Activated B cell treated with CpG ODN at 0.5 μM for 24 hours (primary cell): ENCODE measurements at regions of chr14 and their contacts with region 1.

Region 1: GRCh38 chr14:24093901-24094761 is at the start of gene PCK2:
- DNase-seq: peak; percentile 76
- ATAC-seq: peak; percentile 69
- H3K4me3 Mint-ChIP-seq: peak within 1 kb of the TSS; percentile 99
- H3K27ac Mint-ChIP-seq: peak within 1 kb of the TSS; percentile 99
- H3K4me1 Mint-ChIP-seq: peaks cover 31% of the 10 kb centered on the region
- H3K27me3 Mint-ChIP-seq: no peaks in the 10 kb centered on the region
- CTCF ChIP-seq: no peak
- total RNA-seq, gene PCK2: 82.1 and 102 TPM in 2 replicates

Region 2: GRCh38 chr14:23555882-23556699 is 538.0 kb before region 1 on chr14 and contains the start of gene THTPA:
- CTCF ChIA-PET with region 1: no interaction called
- POLR2A ChIA-PET with region 1: no interaction called
- intact Hi-C with region 1: loop called (anchors 10 kb)
- DNase-seq: peak; percentile 88
- ATAC-seq: peak; percentile 79
- H3K4me3 Mint-ChIP-seq: peak within 1 kb of the TSS; percentile 94
- H3K27ac Mint-ChIP-seq: peak within 1 kb of the TSS; percentile 95
- H3K4me1 Mint-ChIP-seq: peaks cover 30% of the 10 kb centered on the region
- H3K27me3 Mint-ChIP-seq: no peaks in the 10 kb centered on the region
- CTCF ChIP-seq: no peak
- total RNA-seq, gene THTPA: 18.0 and 18.6 TPM in 2 replicates

Region 3: GRCh38 chr14:24058260-24058950 is 35.7 kb before region 1 on chr14:
- CTCF ChIA-PET with region 1: interaction called, 138 read pairs
- POLR2A ChIA-PET with region 1: interaction called, 18 read pairs
- intact Hi-C with region 1: loop called (anchors 1 kb)
- DNase-seq: no peak
- ATAC-seq: peak; percentile 84
- H3K4me3 Mint-ChIP-seq: no peak overlapping the region
- H3K27ac Mint-ChIP-seq: no peak overlapping the region
- H3K4me1 Mint-ChIP-seq: peaks cover 2% of the 10 kb centered on the region
- H3K27me3 Mint-ChIP-seq: no peaks in the 10 kb centered on the region
- CTCF ChIP-seq: no peak

Region 4: DNA sequence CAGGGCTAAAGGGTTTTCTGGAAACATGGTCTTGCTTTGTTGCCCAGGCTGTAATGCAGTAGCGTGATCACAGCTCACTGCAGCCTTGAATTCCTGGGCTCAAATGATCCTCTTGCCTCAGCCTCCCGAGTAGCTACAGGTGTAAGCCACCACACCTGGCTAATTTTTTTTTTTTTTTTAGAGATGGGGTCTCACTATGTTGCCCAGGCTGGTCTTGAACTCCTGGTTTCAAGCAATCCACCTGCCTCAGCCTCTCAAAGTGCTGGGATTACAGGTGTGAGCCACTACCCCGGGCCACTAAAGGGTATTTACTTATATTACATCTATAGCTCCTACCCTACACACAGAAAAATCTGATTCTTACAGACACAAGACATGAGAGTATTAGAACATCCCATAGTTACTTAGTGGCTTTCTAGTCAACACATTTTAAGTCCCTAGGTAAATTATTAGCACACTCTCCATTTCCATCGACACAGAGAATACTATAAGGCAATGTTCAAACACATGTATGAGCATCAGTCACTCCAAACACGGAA is 14.3 kb after region 1 on chr14:
- CTCF ChIA-PET with region 1: interaction called, 137 read pairs
- POLR2A ChIA-PET with region 1: interaction called, 138 read pairs
- intact Hi-C with region 1: loop called (anchors 1 kb)
- DNase-seq: no peak
- ATAC-seq: no peak
- H3K4me3 Mint-ChIP-seq: no peak overlapping the region
- H3K27ac Mint-ChIP-seq: peak overlapping the region; percentile 90
- H3K4me1 Mint-ChIP-seq: peaks cover 12% of the 10 kb centered on the region
- H3K27me3 Mint-ChIP-seq: no peaks in the 10 kb centered on the region
- CTCF ChIP-seq: no peak

Region 5: DNA sequence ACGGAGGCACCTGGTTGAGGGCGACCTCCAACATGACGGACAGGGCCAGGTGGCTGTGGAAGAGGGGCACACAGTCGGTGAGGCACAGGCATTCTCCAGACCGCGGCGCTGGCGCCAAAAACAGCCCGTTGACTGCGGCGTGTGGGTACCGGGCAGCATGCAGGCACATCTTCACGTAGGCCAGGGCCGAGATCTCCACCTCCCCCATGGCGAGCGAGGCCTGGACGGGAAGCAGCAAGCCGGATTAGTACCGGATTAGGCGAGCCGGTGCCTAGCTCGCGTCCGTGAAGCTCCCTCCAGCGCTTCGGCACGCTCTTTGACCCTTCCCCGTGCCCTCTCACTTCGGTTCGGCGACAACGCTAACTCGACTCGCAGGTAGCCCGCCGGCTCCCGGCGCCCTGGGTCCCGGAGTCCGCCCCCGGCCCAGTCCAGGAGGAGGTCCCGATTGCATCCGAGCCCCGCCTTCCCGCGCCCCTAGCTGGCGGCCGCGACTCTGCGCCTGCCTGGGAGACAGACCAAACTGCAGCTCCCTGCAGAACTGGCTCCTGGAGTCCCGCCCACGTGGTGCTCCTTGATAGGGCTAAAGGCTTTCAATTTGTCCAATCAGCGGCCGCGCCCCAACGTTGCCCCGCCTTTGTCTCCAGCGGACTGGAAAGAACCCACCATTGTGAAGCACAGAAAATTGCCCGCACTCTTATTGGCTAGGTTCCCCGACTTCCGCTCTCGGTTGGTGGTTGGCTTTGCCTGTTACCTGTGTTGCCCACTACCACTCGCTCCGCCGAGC is 47.2 kb after region 1 on chr14 and contains the start of gene EMC9:
- CTCF ChIA-PET with region 1: interaction called, 8 read pairs
- POLR2A ChIA-PET with region 1: interaction called, 51 read pairs
- intact Hi-C with region 1: loop called (anchors 1 kb)
- DNase-seq: peak; percentile 92
- ATAC-seq: peak; percentile 90
- H3K4me3 Mint-ChIP-seq: peak within 1 kb of the TSS; percentile 83
- H3K27ac Mint-ChIP-seq: peak within 1 kb of the TSS; percentile 87
- H3K4me1 Mint-ChIP-seq: peaks cover 78% of the 10 kb centered on the region
- H3K27me3 Mint-ChIP-seq: no peaks in the 10 kb centered on the region
- CTCF ChIP-seq: no peak
- total RNA-seq, gene EMC9: 22.5 and 22.6 TPM in 2 replicates

Region 6: GRCh38 chr14:24167469-24168114 is 73.5 kb after region 1 on chr14:
- CTCF ChIA-PET with region 1: no interaction called
- POLR2A ChIA-PET with region 1: no interaction called
- intact Hi-C with region 1: no loop called
- DNase-seq: no peak
- ATAC-seq: no peak
- H3K4me3 Mint-ChIP-seq: no peak overlapping the region
- H3K27ac Mint-ChIP-seq: peak overlapping the region; percentile 37
- H3K4me1 Mint-ChIP-seq: peaks cover 43% of the 10 kb centered on the region
- H3K27me3 Mint-ChIP-seq: no peaks in the 10 kb centered on the region
- CTCF ChIP-seq: no peak

Region 7: DNA sequence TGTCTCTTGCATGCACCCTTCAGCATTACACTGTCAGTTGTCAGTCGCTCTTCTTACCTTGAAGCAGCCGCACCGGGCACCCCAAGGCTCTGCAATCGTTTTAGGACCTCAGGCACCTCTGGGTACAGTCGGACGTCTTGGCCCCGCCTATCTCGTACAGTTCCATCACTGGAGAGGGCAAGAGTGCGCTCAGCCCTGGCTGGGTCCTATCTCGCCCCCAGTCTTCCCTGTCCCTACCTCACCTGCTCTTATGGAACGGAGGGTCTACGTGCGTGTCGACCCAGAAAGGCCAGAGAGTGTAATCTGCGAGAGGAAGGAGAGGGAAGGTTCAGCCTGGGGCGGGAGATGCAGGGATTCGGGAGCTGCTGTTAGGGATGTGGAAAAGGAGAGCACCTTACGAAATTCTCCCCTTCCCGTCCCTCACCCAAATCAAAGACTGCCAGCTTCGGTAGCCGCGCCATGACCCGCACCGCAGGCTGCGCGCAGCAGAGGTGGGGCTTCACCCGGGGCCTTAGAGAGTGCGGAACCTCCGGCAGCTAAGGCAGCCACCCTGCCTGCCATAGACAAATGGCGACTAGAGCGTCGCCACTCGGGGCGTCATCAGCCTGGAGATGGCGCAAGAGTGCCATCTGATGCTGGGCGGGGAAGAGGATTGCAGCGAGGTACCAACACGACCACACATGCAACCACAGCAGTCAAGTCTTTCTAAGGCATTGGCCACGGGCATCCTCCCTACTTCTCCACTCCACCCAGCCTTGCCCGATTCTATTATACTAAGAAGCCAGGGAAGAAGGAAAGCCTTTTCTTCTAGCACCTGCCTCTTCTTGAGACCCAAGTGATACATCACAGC is 121.6 kb after region 1 on chr14 and contains the start of gene MDP1:
- CTCF ChIA-PET with region 1: interaction called, 3 read pairs
- POLR2A ChIA-PET with region 1: interaction called, 22 read pairs
- intact Hi-C with region 1: loop called (anchors 1 kb)
- DNase-seq: peak; percentile 71
- ATAC-seq: peak; percentile 75
- H3K4me3 Mint-ChIP-seq: peak within 1 kb of the TSS; percentile 93
- H3K27ac Mint-ChIP-seq: peak within 1 kb of the TSS; percentile 95
- H3K4me1 Mint-ChIP-seq: peaks cover 50% of the 10 kb centered on the region
- H3K27me3 Mint-ChIP-seq: no peaks in the 10 kb centered on the region
- CTCF ChIP-seq: no peak
- total RNA-seq, gene MDP1: 12.7 and 16.3 TPM in 2 replicates